ENCODE measurements at regions of chr12 and their contacts with region 1.

Region 1: GRCh38 chr12:111396726-111397445 is 8.8 kb upstream of the SH2B3 start:
- DNase-seq: peak; percentile 61
- ATAC-seq: peak; percentile 89
- H3K4me3 ChIP-seq: peak overlapping the region in 2 of 3 experiments; percentile 47 to 63; a peak in 3 of 6 replicates
- H3K27ac ChIP-seq: no peak overlapping the region
- H3K4me1 ChIP-seq: peaks cover 56% of the 10 kb centered on the region
- H3K27me3 ChIP-seq: no peaks in the 10 kb centered on the region; a peak in 2 of 5 replicates
- CTCF ChIP-seq: peak; percentile 98
- EP300 ChIP-seq: no peak
- POLR2A ChIP-seq: no peak
- RAD21 ChIP-seq: peak; percentile 98

Region 2: GRCh38 chr12:111248236-111249017 is 148.5 kb before region 1 on chr12:
- CTCF ChIA-PET with region 1: no interaction called
- POLR2A ChIA-PET with region 1: no interaction called
- in situ Hi-C with region 1: no loop called
- intact Hi-C with region 1: no loop called
- DNase-seq: no peak
- ATAC-seq: no peak
- H3K4me3 ChIP-seq: no peak overlapping the region
- H3K27ac ChIP-seq: no peak overlapping the region
- H3K4me1 ChIP-seq: no peaks in the 10 kb centered on the region
- H3K27me3 ChIP-seq: peaks cover 3 to 44% of the 10 kb centered on the region in 2 experiments; a peak in 4 of 5 replicates
- CTCF ChIP-seq: no peak
- EP300 ChIP-seq: no peak
- POLR2A ChIP-seq: no peak
- RAD21 ChIP-seq: no peak

Region 3: GRCh38 chr12:111330800-111331752 is 65.8 kb before region 1 on chr12:
- CTCF ChIA-PET with region 1: interaction called, 22 read pairs
- POLR2A ChIA-PET with region 1: no interaction called
- in situ Hi-C with region 1: no loop called
- intact Hi-C with region 1: loop called (anchors 1 kb)
- DNase-seq: peak; percentile 59
- ATAC-seq: peak; percentile 61
- H3K4me3 ChIP-seq: no peak overlapping the region
- H3K27ac ChIP-seq: no peak overlapping the region
- H3K4me1 ChIP-seq: no peaks in the 10 kb centered on the region
- H3K27me3 ChIP-seq: peaks cover 0 to 13% of the 10 kb centered on the region in 2 experiments; a peak in 2 of 5 replicates
- CTCF ChIP-seq: peak; percentile 78
- EP300 ChIP-seq: no peak
- POLR2A ChIP-seq: no peak
- RAD21 ChIP-seq: peak; percentile 36; the same call in 1 of the 2 replicates

Region 4: GRCh38 chr12:111451649-111452129 is 54.8 kb after region 1 on chr12:
- CTCF ChIA-PET with region 1: interaction called, 31 read pairs
- POLR2A ChIA-PET with region 1: no interaction called
- in situ Hi-C with region 1: loop called (anchors 5 kb)
- intact Hi-C with region 1: loop called (anchors 2 kb)
- DNase-seq: peak; percentile 53
- ATAC-seq: no peak
- H3K4me3 ChIP-seq: no peak overlapping the region
- H3K27ac ChIP-seq: no peak overlapping the region
- H3K4me1 ChIP-seq: no peaks in the 10 kb centered on the region
- H3K27me3 ChIP-seq: no peaks in the 10 kb centered on the region
- CTCF ChIP-seq: peak; percentile 70
- EP300 ChIP-seq: no peak
- POLR2A ChIP-seq: no peak
- RAD21 ChIP-seq: peak; percentile 44; the same call in 1 of the 2 replicates

Region 5: DNA sequence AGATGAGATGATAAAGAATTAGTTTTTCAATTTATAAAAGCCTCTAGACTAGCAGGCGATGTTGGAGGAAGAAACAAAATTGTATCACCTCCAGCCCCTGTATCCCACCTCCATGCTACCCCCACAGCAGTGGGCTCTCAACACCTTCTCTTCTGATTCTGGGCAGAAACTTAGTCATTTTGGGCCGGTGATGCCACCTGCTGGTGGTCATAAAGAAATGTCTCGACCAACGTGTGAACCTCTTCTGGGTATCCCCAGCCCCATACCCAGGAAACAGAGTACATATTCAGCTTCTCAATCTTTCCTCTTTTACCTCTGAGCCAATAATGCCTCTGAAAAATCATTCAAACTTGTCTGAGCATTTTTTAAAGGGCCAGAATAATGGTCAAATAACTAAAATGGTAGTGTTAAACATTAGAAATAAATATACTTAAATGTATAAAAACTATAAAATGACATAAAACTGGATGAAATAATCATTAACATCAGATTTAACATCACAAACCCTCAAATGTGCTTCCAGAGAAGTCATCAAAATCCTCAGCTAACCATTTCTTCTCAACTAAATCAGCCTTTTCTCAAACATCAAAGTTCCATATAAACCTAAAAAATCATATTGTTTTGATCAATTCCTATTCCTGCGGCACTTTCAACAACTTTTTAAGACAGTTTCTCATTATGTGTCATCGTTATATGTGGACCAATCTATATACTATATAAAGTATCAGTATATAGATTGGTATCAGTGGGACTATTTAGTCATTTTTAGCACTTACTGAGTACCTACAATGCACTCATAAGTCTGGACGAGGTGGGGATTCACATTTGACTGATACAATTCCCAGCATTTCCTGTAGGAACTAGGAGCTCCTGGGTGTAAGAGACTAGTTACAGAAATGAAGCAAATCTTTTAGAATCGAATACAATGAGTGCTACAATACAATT is 132.8 kb after region 1 on chr12:
- CTCF ChIA-PET with region 1: no interaction called
- POLR2A ChIA-PET with region 1: no interaction called
- in situ Hi-C with region 1: no loop called
- intact Hi-C with region 1: loop called (anchors 1 kb)
- DNase-seq: peak; percentile 58
- ATAC-seq: peak; percentile 89
- H3K4me3 ChIP-seq: no peak overlapping the region
- H3K27ac ChIP-seq: no peak overlapping the region
- H3K4me1 ChIP-seq: no peaks in the 10 kb centered on the region
- H3K27me3 ChIP-seq: no peaks in the 10 kb centered on the region
- CTCF ChIP-seq: peak; percentile 77
- EP300 ChIP-seq: no peak
- POLR2A ChIP-seq: no peak
- RAD21 ChIP-seq: no peak

Region 6: DNA sequence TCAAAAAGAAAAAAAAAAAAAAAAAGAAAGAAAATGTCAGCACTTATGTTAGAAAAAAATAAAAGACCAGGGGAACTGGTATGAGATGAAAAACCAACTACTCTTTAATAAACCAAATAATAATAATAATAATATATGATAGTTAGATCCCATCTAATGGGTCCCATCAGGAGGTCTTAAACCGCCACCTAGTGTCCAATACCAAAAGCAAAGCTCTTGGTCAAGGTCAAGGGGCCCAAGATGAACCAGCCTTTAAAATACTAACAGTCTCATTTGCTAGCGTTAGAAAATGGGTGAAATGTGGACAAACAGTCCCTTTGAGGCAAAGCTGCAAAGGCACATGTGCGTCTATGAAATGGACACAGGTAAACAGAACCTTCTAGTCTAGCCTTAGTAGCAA is 276.6 kb after region 1 on chr12:
- CTCF ChIA-PET with region 1: no interaction called
- POLR2A ChIA-PET with region 1: no interaction called
- in situ Hi-C with region 1: loop called (anchors 10 kb)
- intact Hi-C with region 1: no loop called
- DNase-seq: peak; percentile 31
- ATAC-seq: peak; percentile 50; the same call in 2 of the 3 replicates
- H3K4me3 ChIP-seq: no peak overlapping the region
- H3K27ac ChIP-seq: no peak overlapping the region
- H3K4me1 ChIP-seq: no peaks in the 10 kb centered on the region; the same call in 1 of the 2 replicates
- H3K27me3 ChIP-seq: no peaks in the 10 kb centered on the region; a peak in 1 of 5 replicates
- CTCF ChIP-seq: peak; percentile 61
- EP300 ChIP-seq: no peak
- POLR2A ChIP-seq: no peak
- RAD21 ChIP-seq: no peak

Measured in HepG2 (cell line).